ENCODE measurements at regions of chr4 and their contacts with region 1.

Region 1: GRCh38 chr4:99885063-99885664 is 9.1 kb downstream of the LAMTOR3 start:
- DNase-seq: peak; percentile 62
- ATAC-seq: no peak
- H3K4me3 Mint-ChIP-seq: no peak overlapping the region
- H3K27ac Mint-ChIP-seq: no peak overlapping the region
- H3K4me1 Mint-ChIP-seq: peaks cover 7% of the 10 kb centered on the region
- H3K27me3 Mint-ChIP-seq: no peaks in the 10 kb centered on the region

Region 2: GRCh38 chr4:99847362-99847976 is 37.7 kb before region 1 on chr4:
- CTCF ChIA-PET with region 1: interaction called, 10 read pairs
- POLR2A ChIA-PET with region 1: no interaction called
- DNase-seq: peak; percentile 34
- ATAC-seq: peak; percentile 71
- H3K4me3 Mint-ChIP-seq: peak overlapping the region; percentile 5
- H3K27ac Mint-ChIP-seq: peak overlapping the region; percentile 84
- H3K4me1 Mint-ChIP-seq: peaks cover 62% of the 10 kb centered on the region
- H3K27me3 Mint-ChIP-seq: no peaks in the 10 kb centered on the region

Measured in activated CD8-positive, alpha-beta T cell treated with anti-CD3 and anti-CD28 coated beads, Interleukin-2, amount 10 ng/mL, durations not matched to agents 7 days and 5 days (primary cell).